ENCODE measurements at regions of chr12 and their contacts with region 1.

Region 1: DNA sequence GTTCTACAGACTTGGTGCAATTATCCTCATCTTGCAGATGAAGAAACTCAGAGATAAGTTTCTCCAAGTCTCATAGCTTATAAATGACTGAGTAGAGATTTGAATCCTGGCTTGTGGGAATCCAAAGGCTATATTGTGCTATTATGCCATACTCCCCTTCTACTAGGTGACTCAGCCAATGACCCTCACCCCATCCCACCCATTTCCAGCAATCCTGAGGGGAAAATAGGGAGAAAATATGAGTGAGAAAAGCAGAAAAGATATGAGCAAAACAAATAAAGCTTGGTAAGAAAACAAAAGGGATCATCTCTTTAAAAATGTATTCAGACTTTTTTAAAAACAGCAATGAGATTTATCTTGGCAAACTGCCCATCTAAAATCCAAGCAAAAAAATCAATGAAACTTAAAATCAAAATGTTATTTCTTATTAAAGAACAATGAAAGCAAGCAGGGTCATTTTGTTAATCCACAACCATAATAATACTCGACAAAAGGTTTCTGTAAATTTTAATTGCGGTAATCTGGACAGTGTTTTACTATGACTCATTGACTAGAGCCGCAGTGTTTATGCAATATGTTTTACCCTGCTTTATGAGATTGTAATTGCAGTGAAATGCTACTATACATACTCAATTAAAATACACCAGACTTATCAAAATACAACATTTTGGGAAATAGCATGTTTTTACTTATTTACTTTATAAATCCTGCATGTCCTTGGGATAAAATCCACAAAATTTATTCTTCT is 13.1 kb upstream of the LGR5 start:
- DNase-seq: no peak

Region 2: GRCh38 chr12:71548893-71549292 is 122.4 kb after region 1 on chr12:
- intact Hi-C with region 1: loop called in 1 of 2 experiments (anchors 10 kb)
- DNase-seq: no peak

Region 3: GRCh38 chr12:72236071-72236705 is 809.7 kb after region 1 on chr12:
- intact Hi-C with region 1: no loop called
- DNase-seq: no peak